ENCODE measurements at regions of chr12 and their contacts with region 1.

Region 1: DNA sequence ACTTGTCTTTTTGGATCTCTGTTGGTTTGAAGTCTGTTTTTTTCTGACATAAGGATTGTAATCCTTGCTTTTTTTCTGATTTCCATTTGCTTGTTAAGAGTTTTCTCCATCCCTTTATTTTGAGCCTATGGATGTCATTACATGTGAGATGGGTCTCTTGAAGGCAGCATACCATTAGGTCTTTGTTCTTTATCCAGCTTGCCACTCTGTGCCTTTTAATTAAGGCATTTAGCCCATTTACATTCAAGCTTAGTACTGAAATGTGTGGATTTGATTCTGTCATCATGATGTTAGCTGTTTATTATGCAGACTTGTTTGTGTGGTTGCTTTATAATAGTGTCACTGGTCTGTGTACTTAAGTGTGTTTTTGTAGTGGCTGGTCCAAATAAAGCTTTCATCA is 100.0 kb downstream of the CCDC91 start:
- DNase-seq: no peak
- H3K4me3 ChIP-seq: no peak overlapping the region
- H3K27ac ChIP-seq: no peak overlapping the region
- H3K4me1 ChIP-seq: no peaks in the 10 kb centered on the region
- H3K27me3 ChIP-seq: no peaks in the 10 kb centered on the region
- CTCF ChIP-seq: no peak

Region 2: DNA sequence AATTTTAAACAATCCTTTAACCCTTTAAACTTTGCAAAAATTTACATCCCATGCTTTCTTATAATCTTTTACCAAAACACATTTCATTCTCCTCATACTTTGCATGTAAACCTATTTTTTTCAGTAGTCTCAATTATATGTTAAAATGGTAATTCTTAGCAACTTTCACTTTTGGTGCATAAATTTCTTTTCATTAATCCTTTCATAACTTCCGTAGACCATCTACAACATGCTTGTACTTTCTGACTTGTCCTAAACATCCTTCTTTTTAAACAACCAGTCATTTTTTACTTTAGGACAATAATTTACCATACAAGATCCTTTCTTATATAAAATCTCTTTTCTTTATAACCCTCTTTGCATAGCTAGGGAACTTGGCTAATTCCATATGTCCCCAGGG is 80.5 kb before region 1 on chr12:
- CTCF ChIA-PET with region 1: no interaction called
- POLR2A ChIA-PET with region 1: no interaction called
- intact Hi-C with region 1: no loop called
- DNase-seq: no peak
- H3K4me3 ChIP-seq: no peak overlapping the region
- H3K27ac ChIP-seq: no peak overlapping the region
- H3K4me1 ChIP-seq: no peaks in the 10 kb centered on the region
- H3K27me3 ChIP-seq: no peaks in the 10 kb centered on the region
- CTCF ChIP-seq: no peak

Region 3: DNA sequence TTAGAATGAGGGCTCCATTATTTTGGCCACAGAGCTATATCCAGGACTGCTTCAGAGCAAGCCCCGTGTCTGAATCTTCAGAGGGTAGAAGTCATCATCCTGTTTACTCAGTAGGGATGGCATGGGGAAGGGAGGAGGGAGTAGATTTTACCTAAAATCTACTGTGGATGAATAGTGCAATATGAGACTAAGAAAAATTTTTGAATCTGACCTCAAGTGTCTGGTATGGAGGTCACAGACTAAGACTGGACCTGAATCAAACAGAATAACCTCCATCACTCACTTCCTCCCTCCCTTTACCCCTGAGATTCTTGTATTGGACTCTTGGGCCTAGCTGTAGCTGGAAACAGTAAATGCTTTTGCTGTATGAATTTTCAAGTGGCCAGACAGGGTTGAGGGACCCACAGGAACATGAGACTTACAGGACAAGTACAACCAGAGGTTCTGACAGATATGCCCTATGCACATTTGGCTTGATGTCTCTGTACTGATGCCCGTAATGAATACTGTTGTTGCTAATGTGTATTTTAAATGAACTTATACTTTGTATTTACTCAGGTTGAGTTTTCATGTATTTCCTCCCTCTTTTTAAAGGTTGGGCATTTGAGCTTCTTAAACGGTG is 21.5 kb before region 1 on chr12:
- CTCF ChIA-PET with region 1: no interaction called
- POLR2A ChIA-PET with region 1: interaction called, 12 read pairs
- intact Hi-C with region 1: no loop called
- DNase-seq: no peak
- H3K4me3 ChIP-seq: no peak overlapping the region
- H3K27ac ChIP-seq: no peak overlapping the region
- H3K4me1 ChIP-seq: no peaks in the 10 kb centered on the region
- H3K27me3 ChIP-seq: no peaks in the 10 kb centered on the region
- CTCF ChIP-seq: no peak